ENCODE measurements at regions of chr1 and their contacts with region 1.

Region 1: GRCh38 chr1:61539720-61540462 is 185.1 kb downstream of the TM2D1 start:
- DNase-seq: peak; percentile 95
- ATAC-seq: peak; percentile 75
- H3K4me3 ChIP-seq: no peak overlapping the region
- H3K27ac ChIP-seq: peak overlapping the region; percentile 87
- H3K4me1 ChIP-seq: peaks cover 41% of the 10 kb centered on the region
- H3K27me3 ChIP-seq: no peaks in the 10 kb centered on the region
- CTCF ChIP-seq: no peak

Region 2: GRCh38 chr1:61491497-61491896 is 48.4 kb before region 1 on chr1:
- CTCF ChIA-PET with region 1: no interaction called
- POLR2A ChIA-PET with region 1: no interaction called
- intact Hi-C with region 1: loop called (anchors 1 kb)
- DNase-seq: no peak
- ATAC-seq: no peak
- H3K4me3 ChIP-seq: no peak overlapping the region
- H3K27ac ChIP-seq: no peak overlapping the region
- H3K4me1 ChIP-seq: peaks cover 29% of the 10 kb centered on the region
- H3K27me3 ChIP-seq: no peaks in the 10 kb centered on the region
- CTCF ChIP-seq: no peak

Region 3: DNA sequence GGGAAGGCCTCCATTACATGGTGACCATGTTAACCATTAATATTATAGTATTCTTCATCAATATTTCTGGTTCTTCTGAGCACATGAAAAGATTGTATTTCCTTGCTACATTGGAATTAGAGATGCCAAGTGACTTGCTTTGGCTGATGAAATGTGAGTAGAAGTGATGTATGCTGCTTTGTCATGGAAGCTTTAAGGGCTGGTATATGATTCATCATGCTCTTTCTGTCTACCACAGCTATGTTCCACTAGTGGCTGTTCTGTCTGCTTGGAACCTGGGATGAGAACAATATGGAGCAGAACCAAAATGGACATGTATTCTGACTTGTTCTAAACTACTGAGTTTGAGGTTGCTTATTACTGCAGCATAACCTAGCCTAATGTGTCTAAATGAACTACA is 21.8 kb after region 1 on chr1:
- CTCF ChIA-PET with region 1: no interaction called
- POLR2A ChIA-PET with region 1: no interaction called
- intact Hi-C with region 1: no loop called
- DNase-seq: peak; percentile 17
- ATAC-seq: no peak; the same call in 1 of the 2 replicates
- H3K4me3 ChIP-seq: no peak overlapping the region
- H3K27ac ChIP-seq: no peak overlapping the region
- H3K4me1 ChIP-seq: no peaks in the 10 kb centered on the region
- H3K27me3 ChIP-seq: no peaks in the 10 kb centered on the region
- CTCF ChIP-seq: no peak

Region 4: DNA sequence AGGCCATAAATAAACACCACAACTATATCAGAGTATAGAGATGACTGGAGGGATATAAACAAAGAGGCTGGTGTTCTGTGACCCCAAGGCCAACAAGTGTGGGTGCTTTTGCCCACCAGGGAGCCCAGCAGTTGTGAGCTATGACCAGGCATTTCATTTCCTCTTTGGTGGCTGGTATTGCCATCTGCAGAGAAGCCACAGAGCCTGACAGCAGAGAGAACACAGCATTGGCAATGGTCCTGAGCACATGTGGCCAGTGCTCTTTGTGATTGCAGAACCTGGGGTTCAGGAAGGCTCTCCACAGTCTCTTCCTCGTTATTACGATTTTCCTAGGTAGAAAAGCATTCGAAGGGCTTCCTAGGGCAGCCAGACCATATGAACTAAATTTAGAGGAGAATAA is 72.7 kb after region 1 on chr1:
- CTCF ChIA-PET with region 1: no interaction called
- POLR2A ChIA-PET with region 1: no interaction called
- intact Hi-C with region 1: no loop called
- DNase-seq: no peak
- ATAC-seq: no peak
- H3K4me3 ChIP-seq: no peak overlapping the region
- H3K27ac ChIP-seq: no peak overlapping the region
- H3K4me1 ChIP-seq: no peaks in the 10 kb centered on the region
- H3K27me3 ChIP-seq: no peaks in the 10 kb centered on the region
- CTCF ChIP-seq: no peak

Region 5: DNA sequence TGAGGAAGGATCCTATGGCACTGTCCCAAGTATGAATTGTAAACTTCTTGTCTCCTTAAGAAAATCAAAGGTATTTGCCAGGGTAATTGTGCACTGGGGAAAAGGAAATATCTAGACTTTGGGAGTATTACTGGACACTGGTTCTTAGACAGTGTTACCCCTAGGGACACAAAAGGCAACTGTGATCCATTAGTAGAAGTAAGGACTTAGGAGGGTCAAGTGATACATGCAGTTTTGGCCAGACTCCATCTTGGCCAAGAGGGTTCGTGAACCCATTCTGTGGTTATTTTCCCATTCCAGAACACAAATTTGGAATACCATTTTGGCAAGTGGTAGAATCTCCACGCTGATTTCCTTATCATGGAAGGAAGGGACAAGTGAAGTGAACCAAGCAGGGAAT is 86.9 kb after region 1 on chr1:
- CTCF ChIA-PET with region 1: no interaction called
- POLR2A ChIA-PET with region 1: interaction called, 5 read pairs
- intact Hi-C with region 1: loop called (anchors 1 kb)
- DNase-seq: no peak
- ATAC-seq: no peak
- H3K4me3 ChIP-seq: no peak overlapping the region
- H3K27ac ChIP-seq: no peak overlapping the region
- H3K4me1 ChIP-seq: no peaks in the 10 kb centered on the region
- H3K27me3 ChIP-seq: no peaks in the 10 kb centered on the region
- CTCF ChIP-seq: no peak